ENCODE measurements at regions of chr4 and their contacts with region 1.

Region 1: GRCh38 chr4:90425893-90426292 is 298.7 kb downstream of the CCSER1 start:
- DNase-seq: no peak

Region 2: DNA sequence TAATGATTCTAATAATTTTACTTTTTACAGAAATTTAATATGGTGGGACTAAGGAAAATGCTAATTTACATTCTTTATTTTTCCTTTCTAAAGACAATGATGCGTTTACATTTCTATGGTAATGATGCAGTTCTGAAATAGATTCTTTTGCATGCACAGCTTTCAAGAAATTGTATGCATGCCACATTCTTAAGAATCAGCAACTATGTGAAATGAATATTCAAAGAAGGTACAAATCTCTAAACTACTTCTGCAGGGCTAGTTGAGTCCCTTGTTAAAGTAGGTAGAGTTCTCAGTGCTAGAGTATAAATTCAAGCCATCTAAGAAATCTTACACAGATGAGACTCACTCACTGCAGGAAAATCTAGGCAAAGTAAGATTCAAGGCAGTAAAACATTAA is 1853.4 kb after region 1 on chr4:
- intact Hi-C with region 1: loop called (anchors 10 kb)
- DNase-seq: no peak